HepG2 (cell line): ENCODE measurements at regions of chr4 and their contacts with region 1.

Region 1: GRCh38 chr4:68951078-68951805 is at the start of gene UGT2A3:
- DNase-seq: peak; percentile 99
- ATAC-seq: peak; percentile 91
- H3K4me3 ChIP-seq: peak within 1 kb of the TSS; percentile 59 to 93 (median 70); a peak in 5 of 6 replicates
- H3K27ac ChIP-seq: peak within 1 kb of the TSS; percentile 92
- H3K4me1 ChIP-seq: peaks cover 77% of the 10 kb centered on the region
- H3K27me3 ChIP-seq: no peaks in the 10 kb centered on the region
- CTCF ChIP-seq: peak; percentile 30
- EP300 ChIP-seq: peak; percentile 44 to 85; a peak in 2 of 4 replicates
- POLR2A ChIP-seq: peak; percentile 69 to 88
- RAD21 ChIP-seq: no peak
- total RNA-seq, gene UGT2A3: 74.1 and 97.2 TPM in 2 replicates

Region 2: DNA sequence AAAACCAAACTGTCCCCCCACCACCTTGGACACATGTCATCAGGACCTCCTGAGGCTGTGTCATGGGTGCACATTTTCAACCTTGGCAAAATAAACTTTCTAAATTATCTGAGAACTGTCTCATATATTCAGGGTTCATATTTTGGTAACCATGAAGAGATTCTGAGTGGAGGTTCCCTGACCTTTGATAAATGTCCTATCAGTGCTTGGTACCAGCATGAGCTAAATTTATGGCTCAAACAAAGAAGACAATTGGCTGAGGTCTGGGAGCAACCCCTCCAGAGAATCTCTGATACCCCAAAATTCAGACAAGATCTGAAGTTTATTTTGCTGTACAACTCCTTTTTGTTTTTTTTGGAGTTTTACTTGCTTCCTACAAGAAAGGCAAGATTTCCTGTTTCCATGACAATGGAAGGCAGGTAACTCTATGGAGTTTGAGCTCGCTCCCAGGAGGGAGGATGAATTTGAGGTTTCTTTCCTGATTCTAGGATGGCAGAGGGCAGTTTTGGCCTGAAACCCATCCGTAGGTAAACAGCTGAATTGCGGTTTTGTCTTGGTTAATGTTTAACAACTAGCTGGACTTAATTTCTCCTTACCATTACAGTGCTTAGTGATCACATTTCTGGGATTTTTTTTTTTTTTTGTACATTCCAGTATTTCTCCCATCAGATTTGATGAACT is 295.3 kb before region 1 on chr4:
- CTCF ChIA-PET with region 1: no interaction called
- POLR2A ChIA-PET with region 1: interaction called, 8 read pairs
- in situ Hi-C with region 1: no loop called
- intact Hi-C with region 1: loop called (anchors 2 kb)
- DNase-seq: peak; percentile 91
- ATAC-seq: peak; percentile 84
- H3K4me3 ChIP-seq: peak overlapping the region in 2 of 3 experiments; percentile 15 to 26; a peak in 2 of 6 replicates
- H3K27ac ChIP-seq: peak overlapping the region; percentile 95
- H3K4me1 ChIP-seq: peaks cover 53% of the 10 kb centered on the region
- H3K27me3 ChIP-seq: no peaks in the 10 kb centered on the region
- CTCF ChIP-seq: no peak
- EP300 ChIP-seq: peak in 1 of 2 experiments; percentile 72; a peak in 2 of 4 replicates
- POLR2A ChIP-seq: no peak
- RAD21 ChIP-seq: no peak

Region 3: GRCh38 chr4:68864438-68865187 is 86.6 kb before region 1 on chr4:
- CTCF ChIA-PET with region 1: no interaction called
- POLR2A ChIA-PET with region 1: interaction called, 62 read pairs
- in situ Hi-C with region 1: no loop called
- intact Hi-C with region 1: no loop called
- DNase-seq: peak; percentile 92
- ATAC-seq: peak; percentile 96
- H3K4me3 ChIP-seq: peak overlapping the region in 2 of 3 experiments; percentile 35 to 51; a peak in 3 of 6 replicates
- H3K27ac ChIP-seq: peak overlapping the region; percentile 76
- H3K4me1 ChIP-seq: peaks cover 61% of the 10 kb centered on the region
- H3K27me3 ChIP-seq: no peaks in the 10 kb centered on the region
- CTCF ChIP-seq: 0 out of 2 replicates have a peak, but pooled peaks have one; percentile 10
- EP300 ChIP-seq: peak in 1 of 2 experiments; percentile 86; a peak in 2 of 4 replicates
- POLR2A ChIP-seq: no peak; a peak in 1 of 4 replicates
- RAD21 ChIP-seq: no peak

Region 4: DNA sequence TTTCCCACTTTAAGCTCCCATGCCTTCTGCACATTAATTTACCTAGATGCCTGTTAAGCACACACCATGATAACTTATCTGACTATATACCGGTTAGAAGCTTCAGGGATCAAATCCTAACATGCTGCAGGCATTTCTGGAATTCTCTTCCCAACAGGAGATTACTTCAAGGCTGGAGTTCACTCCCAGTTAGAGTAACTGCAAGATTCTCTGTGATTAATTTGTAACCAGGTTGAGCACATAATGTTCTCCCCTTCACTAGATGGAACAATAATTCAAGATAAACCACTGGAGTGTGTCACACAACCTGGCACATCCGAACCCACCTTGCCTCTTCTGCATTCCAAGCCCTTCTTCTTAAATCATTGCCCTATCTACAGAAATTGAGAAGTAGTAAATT is 12.1 kb after region 1 on chr4:
- CTCF ChIA-PET with region 1: no interaction called
- POLR2A ChIA-PET with region 1: interaction called, 16 read pairs
- in situ Hi-C with region 1: no loop called
- intact Hi-C with region 1: no loop called
- DNase-seq: no peak
- ATAC-seq: no peak
- H3K4me3 ChIP-seq: no peak overlapping the region
- H3K27ac ChIP-seq: no peak overlapping the region
- H3K4me1 ChIP-seq: peaks cover 34% of the 10 kb centered on the region
- H3K27me3 ChIP-seq: no peaks in the 10 kb centered on the region
- CTCF ChIP-seq: no peak
- EP300 ChIP-seq: no peak
- POLR2A ChIP-seq: no peak
- RAD21 ChIP-seq: no peak

Region 5: DNA sequence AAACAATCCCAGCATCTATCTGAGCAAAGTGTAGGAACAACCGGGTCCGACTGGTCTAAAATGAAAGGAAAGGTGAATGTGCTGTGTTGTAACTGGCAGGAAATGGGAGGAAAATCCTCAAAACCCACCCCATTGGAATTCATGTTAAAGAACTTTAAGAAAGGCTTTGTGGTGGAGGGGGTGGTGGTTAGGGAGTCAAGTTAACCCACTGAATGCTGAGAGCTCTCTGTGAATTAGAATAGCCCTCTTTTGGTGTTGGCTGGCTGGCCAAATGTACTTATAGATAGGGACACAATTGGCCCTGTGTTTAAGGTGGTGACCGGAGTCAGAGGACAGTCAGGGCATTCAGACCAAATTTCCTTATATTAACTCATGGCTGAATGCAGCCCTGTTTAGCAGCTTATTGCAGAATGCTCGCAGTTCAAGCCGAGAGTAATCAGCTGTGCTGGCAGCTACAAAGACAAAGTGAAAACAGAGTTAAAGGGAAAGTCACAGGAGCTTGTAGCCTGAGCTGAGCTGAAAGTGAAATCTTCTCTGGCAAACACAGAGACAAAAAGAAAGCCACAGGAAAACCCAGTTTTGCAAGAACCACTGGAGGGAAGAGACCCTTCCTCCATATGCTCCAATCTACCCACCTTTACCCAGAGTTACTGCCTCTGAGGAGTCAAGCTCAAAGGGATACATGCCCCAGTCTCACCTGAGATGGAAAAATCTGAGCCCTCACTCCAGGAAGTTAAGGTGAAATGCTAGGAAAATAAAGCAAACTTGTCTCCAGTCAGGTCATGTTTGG is 106.6 kb after region 1 on chr4:
- CTCF ChIA-PET with region 1: no interaction called
- POLR2A ChIA-PET with region 1: interaction called, 19 read pairs
- in situ Hi-C with region 1: no loop called
- intact Hi-C with region 1: loop called (anchors 2 kb)
- DNase-seq: peak; percentile 93
- ATAC-seq: peak; percentile 87
- H3K4me3 ChIP-seq: peak overlapping the region; percentile 11 to 43 (median 31); a peak in 5 of 6 replicates
- H3K27ac ChIP-seq: peak overlapping the region; percentile 88
- H3K4me1 ChIP-seq: peaks cover 78% of the 10 kb centered on the region
- H3K27me3 ChIP-seq: no peaks in the 10 kb centered on the region
- CTCF ChIP-seq: no peak
- EP300 ChIP-seq: peak in 1 of 2 experiments; percentile 71; a peak in 1 of 4 replicates
- POLR2A ChIP-seq: peak; percentile 14 to 38
- RAD21 ChIP-seq: no peak

Region 6: DNA sequence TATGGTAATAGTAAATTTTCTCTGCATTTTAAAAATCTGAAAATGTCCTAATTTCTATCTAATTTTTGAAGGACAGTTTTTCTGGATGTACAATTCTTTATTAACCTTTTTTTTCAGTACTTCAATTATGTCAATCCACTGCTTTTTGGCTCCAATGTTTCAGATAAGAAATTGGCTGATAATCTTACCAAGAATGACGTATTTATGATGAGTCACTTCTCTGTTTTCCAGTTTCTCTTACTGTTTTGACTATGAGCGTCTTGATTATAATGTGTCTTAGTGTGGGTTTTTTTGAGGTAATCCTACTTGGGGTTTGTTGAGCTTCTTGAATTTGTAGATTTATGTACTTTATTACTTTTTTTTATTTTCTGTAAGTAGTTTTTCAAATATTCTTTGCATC is 216.1 kb after region 1 on chr4:
- CTCF ChIA-PET with region 1: no interaction called
- POLR2A ChIA-PET with region 1: interaction called, 3 read pairs
- in situ Hi-C with region 1: no loop called
- intact Hi-C with region 1: loop called (anchors 10 kb)
- DNase-seq: no peak
- ATAC-seq: no peak
- H3K4me3 ChIP-seq: no peak overlapping the region
- H3K27ac ChIP-seq: no peak overlapping the region
- H3K4me1 ChIP-seq: peaks cover 41% of the 10 kb centered on the region
- H3K27me3 ChIP-seq: no peaks in the 10 kb centered on the region
- CTCF ChIP-seq: no peak
- EP300 ChIP-seq: no peak
- POLR2A ChIP-seq: no peak
- RAD21 ChIP-seq: no peak

Region 7: GRCh38 chr4:70008771-70009170 is 1057.5 kb after region 1 on chr4:
- CTCF ChIA-PET with region 1: no interaction called
- POLR2A ChIA-PET with region 1: no interaction called
- in situ Hi-C with region 1: no loop called
- intact Hi-C with region 1: no loop called
- DNase-seq: no peak
- ATAC-seq: no peak
- H3K4me3 ChIP-seq: no peak overlapping the region
- H3K27ac ChIP-seq: no peak overlapping the region
- H3K4me1 ChIP-seq: peaks cover 9% of the 10 kb centered on the region; the same call in 1 of the 2 replicates
- H3K27me3 ChIP-seq: no peaks in the 10 kb centered on the region
- CTCF ChIP-seq: no peak
- EP300 ChIP-seq: no peak
- POLR2A ChIP-seq: no peak
- RAD21 ChIP-seq: no peak